OCI-LY7 (cell line): ENCODE measurements at regions of chr13 and their contacts with region 1.

Region 1: DNA sequence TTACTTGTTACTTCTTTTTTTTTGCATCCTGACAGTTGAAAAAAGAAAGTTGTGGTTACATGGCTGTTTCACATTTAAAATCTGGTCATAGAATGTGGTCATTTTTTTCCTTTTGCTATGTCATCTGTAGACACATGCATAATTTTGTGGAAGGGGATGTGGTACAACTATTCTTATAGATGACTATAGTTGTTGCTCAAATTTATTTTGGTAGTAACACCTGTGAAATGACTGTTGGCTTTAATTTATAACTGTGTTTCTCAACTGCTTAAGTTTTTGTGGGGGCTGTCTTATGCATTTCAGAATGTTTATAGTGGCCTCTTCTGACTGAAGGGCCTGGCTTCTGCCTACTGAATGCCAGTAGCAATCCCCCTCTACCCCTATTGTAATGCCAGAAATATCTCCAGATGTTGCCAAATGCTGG is 130.5 kb downstream of the PAN3 start:
- DNase-seq: peak; percentile 88
- H3K4me3 ChIP-seq: peak overlapping the region; percentile 24
- H3K27ac ChIP-seq: peak overlapping the region; percentile 92
- H3K4me1 ChIP-seq: peaks cover 45% of the 10 kb centered on the region
- CTCF ChIP-seq: 0 out of 2 replicates have a peak, but pooled peaks have one; percentile 32

Region 2: DNA sequence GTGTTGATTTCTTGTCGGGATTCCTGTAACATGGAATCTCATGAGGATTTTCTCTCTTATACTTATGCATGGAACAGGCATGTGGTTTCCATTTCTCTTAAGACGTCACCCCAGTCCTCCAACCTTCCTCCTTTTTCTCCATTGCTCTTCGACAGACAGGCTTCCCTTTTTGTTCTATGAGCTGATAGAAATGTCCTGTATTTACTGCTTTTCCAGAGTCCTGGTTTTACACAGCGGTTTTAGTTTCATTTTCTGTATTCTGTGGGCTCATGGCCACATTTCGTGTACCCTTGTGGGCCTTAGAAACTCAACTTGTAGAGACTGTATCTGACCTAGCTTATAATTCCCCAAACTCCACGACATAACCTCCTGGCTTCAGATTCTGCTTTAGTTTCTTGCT is 17.3 kb before region 1 on chr13:
- CTCF ChIA-PET with region 1: no interaction called
- POLR2A ChIA-PET with region 1: no interaction called
- intact Hi-C with region 1: no loop called
- DNase-seq: no peak
- H3K4me3 ChIP-seq: no peak overlapping the region
- H3K27ac ChIP-seq: no peak overlapping the region
- H3K4me1 ChIP-seq: peaks cover 4% of the 10 kb centered on the region
- CTCF ChIP-seq: no peak

Region 3: DNA sequence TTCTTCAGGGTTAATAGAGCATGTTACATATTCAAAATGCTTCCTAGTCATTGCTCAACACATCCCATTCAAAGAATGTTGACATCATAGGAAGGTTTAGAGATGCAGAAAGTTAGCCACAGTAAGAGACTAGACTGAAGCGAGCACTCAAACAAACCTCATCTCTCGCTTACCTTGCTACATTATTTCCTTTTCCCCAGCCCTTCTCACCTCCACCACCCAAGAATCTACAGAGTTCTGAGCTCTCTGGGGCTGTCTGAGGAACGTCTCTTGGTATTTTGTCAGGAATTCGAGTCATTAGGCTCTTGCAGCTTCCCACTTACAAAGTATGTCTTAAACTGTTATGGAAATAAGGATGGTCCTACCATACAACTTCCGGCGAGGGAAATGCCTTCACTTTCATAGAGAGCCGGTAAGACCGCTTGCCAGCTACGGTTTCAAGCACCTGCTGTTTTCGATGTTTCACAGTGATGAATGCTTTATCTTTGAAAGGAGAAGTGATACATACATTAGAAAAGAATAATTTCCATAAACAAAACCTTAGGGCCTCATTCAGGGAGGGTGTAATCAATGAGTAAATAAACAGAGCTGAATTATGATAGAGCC is 161.0 kb after region 1 on chr13:
- CTCF ChIA-PET with region 1: no interaction called
- POLR2A ChIA-PET with region 1: no interaction called
- intact Hi-C with region 1: loop called (anchors 5 kb)
- DNase-seq: peak; percentile 91
- H3K4me3 ChIP-seq: peak overlapping the region; percentile 63
- H3K27ac ChIP-seq: peak overlapping the region; percentile 93
- H3K4me1 ChIP-seq: peaks cover 38% of the 10 kb centered on the region
- CTCF ChIP-seq: no peak